ENCODE measurements at regions of chrX and their contacts with region 1.

Region 1: GRCh38 chrX:46912098-46912602 is at the start of gene JADE3:
- DNase-seq: peak; percentile 23
- H3K4me3 Mint-ChIP-seq: peak within 1 kb of the TSS; percentile 73
- H3K27ac Mint-ChIP-seq: no peak within 1 kb of the TSS
- H3K4me1 Mint-ChIP-seq: peaks cover 12% of the 10 kb centered on the region
- H3K27me3 Mint-ChIP-seq: peaks cover 32% of the 10 kb centered on the region
- total RNA-seq, gene JADE3: 1.4 TPM

Region 2: DNA sequence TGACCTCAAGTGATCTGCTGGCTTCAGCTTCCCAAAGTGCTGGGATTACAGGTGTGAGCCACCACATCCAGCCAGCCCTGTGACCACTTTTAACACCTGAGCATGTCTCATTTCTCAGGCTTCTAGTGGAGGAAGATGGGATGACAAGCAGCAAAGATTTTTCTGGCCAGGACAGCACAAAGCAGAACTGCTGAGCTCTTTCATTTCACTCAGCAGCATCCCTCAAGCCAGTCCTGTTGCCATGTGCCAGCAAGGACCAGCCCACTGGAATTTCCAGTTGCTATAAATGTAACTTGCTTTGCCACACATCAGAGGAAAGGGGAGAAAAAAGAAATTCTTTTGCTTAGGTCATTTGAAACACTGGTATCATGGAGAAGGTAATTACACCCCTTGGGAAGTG is 229.1 kb before region 1 on chrX:
- CTCF ChIA-PET with region 1: no interaction called
- intact Hi-C with region 1: no loop called
- DNase-seq: no peak
- H3K4me3 Mint-ChIP-seq: no peak overlapping the region
- H3K27ac Mint-ChIP-seq: no peak overlapping the region
- H3K4me1 Mint-ChIP-seq: peaks cover 11% of the 10 kb centered on the region
- H3K27me3 Mint-ChIP-seq: no peaks in the 10 kb centered on the region

Region 3: DNA sequence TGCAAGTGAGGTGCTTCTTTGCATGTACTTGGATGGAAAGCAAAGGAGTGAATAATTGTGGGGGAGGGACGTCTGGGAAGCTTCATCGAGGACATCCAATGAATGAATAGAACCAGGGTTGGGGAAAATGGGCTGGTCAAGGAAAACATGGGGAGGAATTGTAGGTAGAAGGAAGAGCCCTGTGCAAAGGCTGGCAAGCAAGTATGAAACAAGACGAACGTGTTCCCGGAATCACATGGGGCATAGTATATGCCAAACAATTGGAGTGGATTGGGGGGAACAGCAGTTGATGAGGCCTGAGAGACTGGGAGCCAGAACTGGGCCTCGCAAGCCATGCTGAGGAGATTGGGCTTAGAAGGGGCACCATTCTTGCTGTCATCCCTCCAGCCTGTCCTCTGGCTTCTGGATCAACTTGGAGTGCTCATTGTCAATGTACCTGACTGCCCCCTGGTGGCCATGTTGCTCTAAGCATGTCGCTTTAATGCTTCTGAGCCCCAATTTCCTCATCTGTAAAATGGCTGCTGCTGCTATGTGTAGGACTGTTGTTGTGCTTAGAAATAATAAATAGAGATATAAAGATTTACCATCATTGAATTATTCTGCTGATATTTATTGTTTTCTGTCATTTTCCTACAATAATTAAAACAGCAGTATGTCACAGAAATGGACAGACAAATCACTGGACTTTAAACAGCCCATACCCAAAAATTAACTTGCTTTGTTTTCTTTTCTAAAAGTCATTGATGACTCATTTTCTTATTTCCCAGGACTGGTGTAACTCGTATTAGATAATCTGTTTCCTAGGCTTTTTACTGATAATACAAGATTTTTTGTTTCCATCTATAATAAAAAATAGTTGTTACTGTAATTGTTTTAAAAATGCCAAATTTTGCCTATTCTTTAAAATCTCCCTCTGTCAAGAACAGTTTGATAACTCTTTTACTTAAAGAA is 66.5 kb after region 1 on chrX:
- CTCF ChIA-PET with region 1: no interaction called
- intact Hi-C with region 1: loop called (anchors 2 kb)
- DNase-seq: peak; percentile 87
- H3K4me3 Mint-ChIP-seq: no peak overlapping the region
- H3K27ac Mint-ChIP-seq: no peak overlapping the region
- H3K4me1 Mint-ChIP-seq: no peaks in the 10 kb centered on the region
- H3K27me3 Mint-ChIP-seq: no peaks in the 10 kb centered on the region

Measured in activated naive CD4-positive, alpha-beta T cell treated with anti-CD3 and anti-CD28 coated beads for 36 hours (primary cell).